ENCODE measurements at regions of chr14 and their contacts with region 1.

Region 1: GRCh38 chr14:52299692-52300278 is 14.3 kb upstream of the PTGER2 start:
- DNase-seq: no peak
- ATAC-seq: peak; percentile 75
- H3K4me3 Mint-ChIP-seq: no peak overlapping the region
- H3K27ac Mint-ChIP-seq: no peak overlapping the region
- H3K4me1 Mint-ChIP-seq: peaks cover 16% of the 10 kb centered on the region
- H3K27me3 Mint-ChIP-seq: no peaks in the 10 kb centered on the region
- CTCF ChIP-seq: peak; percentile 83

Region 2: DNA sequence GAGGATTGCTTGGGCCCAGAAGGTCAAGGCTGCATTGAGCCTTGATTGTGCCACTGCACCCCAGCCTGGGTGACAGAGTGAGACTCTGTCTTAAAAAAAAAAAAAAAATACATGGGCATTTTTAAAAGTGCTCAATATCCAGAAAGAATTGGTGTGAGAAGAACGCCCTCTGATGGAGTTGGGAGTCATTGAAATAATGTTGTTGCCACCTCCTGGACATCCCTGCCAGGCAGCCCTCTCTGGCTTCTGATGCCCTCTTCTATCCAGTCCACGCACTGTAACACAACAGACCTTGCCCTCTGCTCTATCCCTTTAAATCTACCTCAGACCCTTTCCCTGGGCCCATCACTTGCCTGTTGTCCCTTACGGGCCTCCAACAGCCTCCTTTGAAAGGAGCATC is 27.4 kb before region 1 on chr14:
- CTCF ChIA-PET with region 1: no interaction called
- POLR2A ChIA-PET with region 1: no interaction called
- intact Hi-C with region 1: no loop called
- DNase-seq: peak; percentile 52
- ATAC-seq: peak; percentile 53
- H3K4me3 Mint-ChIP-seq: no peak overlapping the region
- H3K27ac Mint-ChIP-seq: peak overlapping the region; percentile 52
- H3K4me1 Mint-ChIP-seq: peaks cover 21% of the 10 kb centered on the region
- H3K27me3 Mint-ChIP-seq: peaks cover 19% of the 10 kb centered on the region
- CTCF ChIP-seq: peak; percentile 49

Region 3: GRCh38 chr14:52286661-52287649 is 12.8 kb before region 1 on chr14:
- CTCF ChIA-PET with region 1: interaction called, 23 read pairs
- POLR2A ChIA-PET with region 1: no interaction called
- intact Hi-C with region 1: no loop called
- DNase-seq: no peak
- ATAC-seq: peak; percentile 53
- H3K4me3 Mint-ChIP-seq: no peak overlapping the region
- H3K27ac Mint-ChIP-seq: peak overlapping the region; percentile 6
- H3K4me1 Mint-ChIP-seq: peaks cover 21% of the 10 kb centered on the region
- H3K27me3 Mint-ChIP-seq: peaks cover 2% of the 10 kb centered on the region
- CTCF ChIP-seq: no peak

Region 4: GRCh38 chr14:52473557-52473956 is 173.8 kb after region 1 on chr14:
- CTCF ChIA-PET with region 1: interaction called, 12 read pairs
- POLR2A ChIA-PET with region 1: no interaction called
- intact Hi-C with region 1: loop called (anchors 2 kb)
- DNase-seq: no peak
- ATAC-seq: no peak
- H3K4me3 Mint-ChIP-seq: no peak overlapping the region
- H3K27ac Mint-ChIP-seq: no peak overlapping the region
- H3K4me1 Mint-ChIP-seq: peaks cover 7% of the 10 kb centered on the region
- H3K27me3 Mint-ChIP-seq: no peaks in the 10 kb centered on the region
- CTCF ChIP-seq: peak; percentile 64